ENCODE measurements at regions of chr20 and their contacts with region 1.

Region 1: DNA sequence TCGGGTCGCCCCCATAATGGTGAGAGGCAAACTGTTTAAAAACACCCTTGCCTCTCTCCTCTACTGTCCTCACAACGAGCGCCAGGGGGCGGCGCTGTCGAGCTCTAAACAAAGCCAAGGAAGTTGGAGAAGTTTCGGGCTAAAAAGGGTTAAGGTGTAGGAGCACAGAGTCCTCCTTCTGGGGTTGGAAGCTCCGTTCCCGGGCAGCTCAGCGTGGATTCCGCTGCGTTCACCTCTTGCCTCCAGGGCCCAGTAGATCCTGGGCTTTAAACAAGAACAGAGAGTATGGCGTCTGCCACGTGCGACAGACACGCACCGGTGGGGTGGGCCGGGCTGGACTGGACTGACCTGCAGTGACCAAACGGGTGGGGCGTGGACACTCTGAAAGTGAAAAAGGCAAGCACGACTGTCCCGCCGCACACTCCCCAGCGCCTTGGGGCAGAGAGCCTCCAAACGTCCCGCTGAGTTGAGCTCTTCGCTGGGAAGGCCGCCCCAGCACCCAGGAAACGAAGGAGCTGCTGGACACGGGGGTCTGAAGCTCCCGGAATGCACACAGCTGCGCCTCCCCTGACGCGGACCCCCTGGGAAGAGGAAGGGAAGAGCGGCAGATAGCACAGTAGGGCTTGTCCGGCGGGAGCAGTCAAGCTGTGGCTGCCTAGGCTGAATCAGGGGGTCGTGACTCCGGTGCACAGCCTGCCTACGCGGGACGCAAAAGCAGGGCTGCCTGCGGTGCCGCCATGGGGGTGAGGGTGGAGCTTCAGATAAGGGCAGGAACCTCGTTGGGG is 1.6 kb upstream of the THBD start:
- DNase-seq: peak; percentile 67 to 82 (median 77)
- H3K4me3 ChIP-seq: peak overlapping the region; percentile 36
- H3K27ac ChIP-seq: peak overlapping the region in 1 of 2 donors; percentile 36
- H3K4me1 ChIP-seq: peaks cover 7% of the 10 kb centered on the region
- H3K27me3 ChIP-seq: no peaks in the 10 kb centered on the region
- CTCF ChIP-seq: peak; percentile 34 to 66 (median 61)
- EP300 ChIP-seq: no peak
- POLR2A ChIP-seq: no peak

Region 2: DNA sequence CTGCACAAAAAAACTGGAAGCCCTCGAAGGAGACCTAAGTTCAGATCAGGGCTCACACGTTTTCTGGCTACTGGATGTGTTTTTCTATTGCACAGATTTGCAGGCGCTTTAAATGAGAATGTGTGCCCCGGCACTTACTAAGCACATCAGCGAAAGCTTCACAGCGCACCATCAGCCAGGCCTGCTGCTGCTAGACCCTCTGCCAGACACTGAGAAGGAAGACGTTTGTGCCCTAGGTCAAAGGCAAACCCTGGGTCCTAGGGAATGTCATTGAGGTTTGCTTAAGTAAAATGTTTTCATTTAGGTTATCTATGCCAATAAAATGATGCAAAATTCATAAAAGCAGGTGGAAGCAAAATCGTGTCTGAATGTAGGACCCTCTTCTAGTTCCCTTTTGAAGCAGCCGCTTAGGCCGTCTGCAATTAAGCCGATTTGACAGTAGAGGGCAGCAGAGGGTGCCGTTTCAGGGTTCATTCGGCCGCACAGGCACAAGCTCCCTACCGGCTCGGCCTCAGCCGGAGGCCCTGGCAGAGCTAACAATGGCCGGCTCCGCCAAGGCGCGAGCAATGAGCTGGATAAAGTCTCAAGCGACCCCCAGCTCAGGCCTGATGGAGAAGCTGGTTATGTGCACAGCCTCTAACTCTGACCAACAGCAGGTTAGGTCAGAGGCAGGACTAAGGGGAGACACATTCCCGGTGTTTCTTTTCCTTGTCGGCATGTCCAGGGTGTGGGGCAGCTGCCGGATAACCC is 359.5 kb before region 1 on chr20:
- intact Hi-C with region 1: loop called in 2 of 4 experiments (anchors 5 to 10 kb)
- DNase-seq: peak; percentile 70 to 83 (median 81)
- H3K4me3 ChIP-seq: peak overlapping the region; percentile 7
- H3K27ac ChIP-seq: no peak overlapping the region
- H3K4me1 ChIP-seq: peaks cover 5% of the 10 kb centered on the region
- H3K27me3 ChIP-seq: no peaks in the 10 kb centered on the region
- CTCF ChIP-seq: peak; percentile 84 to 87 (median 85)
- EP300 ChIP-seq: no peak
- POLR2A ChIP-seq: no peak

Region 3: GRCh38 chr20:22984606-22985005 is 66.4 kb before region 1 on chr20:
- intact Hi-C with region 1: no loop called
- DNase-seq: no peak
- H3K4me3 ChIP-seq: no peak overlapping the region
- H3K27ac ChIP-seq: no peak overlapping the region
- H3K4me1 ChIP-seq: no peaks in the 10 kb centered on the region
- H3K27me3 ChIP-seq: no peaks in the 10 kb centered on the region
- CTCF ChIP-seq: no peak
- EP300 ChIP-seq: no peak
- POLR2A ChIP-seq: no peak

Region 4: DNA sequence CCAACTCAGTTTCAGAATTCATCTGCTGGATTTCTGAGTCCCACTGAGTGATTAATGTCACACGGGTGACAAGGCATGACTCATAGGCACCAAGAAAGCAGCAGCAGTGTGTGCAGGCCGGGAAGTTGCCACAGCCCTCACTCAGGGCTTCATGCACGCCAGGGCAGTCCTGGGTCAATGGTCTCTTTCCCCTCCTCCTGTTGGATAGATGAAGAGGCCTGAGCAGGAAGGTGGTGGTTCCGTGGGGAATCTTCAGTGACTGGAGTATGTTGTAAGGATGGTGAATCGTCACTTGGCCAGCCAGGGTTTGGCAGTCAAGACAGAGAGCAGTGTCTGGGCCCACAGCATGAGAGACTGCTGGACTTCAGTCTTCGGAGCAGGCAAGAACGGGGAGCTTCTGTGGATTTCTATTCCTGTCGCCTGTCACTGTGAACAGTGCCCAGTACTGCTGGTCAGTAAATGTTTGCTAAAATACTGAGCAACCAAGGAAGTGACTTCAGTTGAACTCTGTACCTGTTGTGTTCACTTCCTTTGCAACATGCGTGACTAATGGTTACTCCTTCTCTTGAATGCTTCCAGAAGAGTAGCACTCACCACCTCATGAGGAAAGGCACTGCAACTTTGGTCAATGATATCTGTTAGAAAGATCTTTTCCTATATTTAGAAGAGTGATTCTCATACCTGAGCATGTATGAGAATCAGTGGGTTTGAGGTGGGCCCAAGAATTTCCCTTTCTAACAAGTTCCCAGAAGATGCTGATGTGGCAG is 97.1 kb after region 1 on chr20:
- intact Hi-C with region 1: loop called in 1 of 4 experiments (anchors 10 kb)
- DNase-seq: no peak
- H3K4me3 ChIP-seq: no peak overlapping the region
- H3K27ac ChIP-seq: no peak overlapping the region
- H3K4me1 ChIP-seq: peaks cover 4% of the 10 kb centered on the region
- H3K27me3 ChIP-seq: no peaks in the 10 kb centered on the region
- CTCF ChIP-seq: no peak
- EP300 ChIP-seq: no peak
- POLR2A ChIP-seq: no peak

Region 5: GRCh38 chr20:23235173-23236027 is 184.4 kb after region 1 on chr20:
- intact Hi-C with region 1: loop called (anchors 1 to 5 kb)
- DNase-seq: peak; percentile 76 to 83 (median 79)
- H3K4me3 ChIP-seq: no peak overlapping the region
- H3K27ac ChIP-seq: no peak overlapping the region
- H3K4me1 ChIP-seq: peaks cover 8% of the 10 kb centered on the region
- H3K27me3 ChIP-seq: no peaks in the 10 kb centered on the region
- CTCF ChIP-seq: peak; percentile 60 to 80 (median 71)
- EP300 ChIP-seq: no peak
- POLR2A ChIP-seq: no peak

Region 6: GRCh38 chr20:23245553-23246181 is 194.6 kb after region 1 on chr20:
- intact Hi-C with region 1: loop called in 1 of 4 experiments (anchors 5 kb)
- DNase-seq: peak in 2 of 5 donors; percentile 34 to 36
- H3K4me3 ChIP-seq: no peak overlapping the region
- H3K27ac ChIP-seq: no peak overlapping the region
- H3K4me1 ChIP-seq: peaks cover 2% of the 10 kb centered on the region
- H3K27me3 ChIP-seq: no peaks in the 10 kb centered on the region
- CTCF ChIP-seq: no peak
- EP300 ChIP-seq: no peak
- POLR2A ChIP-seq: no peak

Region 7: GRCh38 chr20:23622839-23623343 is 571.9 kb after region 1 on chr20:
- intact Hi-C with region 1: loop called in 1 of 4 experiments (anchors 5 kb)
- DNase-seq: peak in 4 of 5 donors; percentile 69 to 80 (median 79)
- H3K4me3 ChIP-seq: peak overlapping the region; percentile 22
- H3K27ac ChIP-seq: peak overlapping the region; percentile 57 to 75
- H3K4me1 ChIP-seq: peaks cover 2% of the 10 kb centered on the region
- H3K27me3 ChIP-seq: no peaks in the 10 kb centered on the region
- CTCF ChIP-seq: no peak
- EP300 ChIP-seq: peak; percentile 99
- POLR2A ChIP-seq: no peak

Measured in ovary (tissue), 10 donors.